ENCODE measurements at regions of chr9 and their contacts with region 1.

Region 1: GRCh38 chr9:70639853-70640814 is 225.7 kb upstream of the KLF9 start:
- DNase-seq: peak; percentile 62
- H3K4me3 ChIP-seq: no peak overlapping the region
- H3K27ac ChIP-seq: no peak overlapping the region
- H3K4me1 ChIP-seq: peaks cover 5% of the 10 kb centered on the region
- H3K27me3 ChIP-seq: peaks cover 0 to 2% of the 10 kb centered on the region in 2 experiments
- CTCF ChIP-seq: peak; percentile 51
- POLR2A ChIP-seq: no peak

Region 2: GRCh38 chr9:70542311-70542931 is 97.7 kb before region 1 on chr9:
- CTCF ChIA-PET with region 1: no interaction called
- POLR2A ChIA-PET with region 1: no interaction called
- dilution Hi-C with region 1: no loop called
- intact Hi-C with region 1: no loop called
- DNase-seq: no peak
- H3K4me3 ChIP-seq: no peak overlapping the region
- H3K27ac ChIP-seq: no peak overlapping the region
- H3K4me1 ChIP-seq: no peaks in the 10 kb centered on the region
- H3K27me3 ChIP-seq: no peaks in the 10 kb centered on the region
- CTCF ChIP-seq: no peak
- POLR2A ChIP-seq: no peak

Region 3: GRCh38 chr9:70563431-70564204 is 76.5 kb before region 1 on chr9:
- CTCF ChIA-PET with region 1: no interaction called
- POLR2A ChIA-PET with region 1: no interaction called
- dilution Hi-C with region 1: no loop called
- intact Hi-C with region 1: no loop called
- DNase-seq: no peak
- H3K4me3 ChIP-seq: no peak overlapping the region
- H3K27ac ChIP-seq: no peak overlapping the region
- H3K4me1 ChIP-seq: no peaks in the 10 kb centered on the region
- H3K27me3 ChIP-seq: no peaks in the 10 kb centered on the region
- CTCF ChIP-seq: no peak
- POLR2A ChIP-seq: no peak

Region 4: DNA sequence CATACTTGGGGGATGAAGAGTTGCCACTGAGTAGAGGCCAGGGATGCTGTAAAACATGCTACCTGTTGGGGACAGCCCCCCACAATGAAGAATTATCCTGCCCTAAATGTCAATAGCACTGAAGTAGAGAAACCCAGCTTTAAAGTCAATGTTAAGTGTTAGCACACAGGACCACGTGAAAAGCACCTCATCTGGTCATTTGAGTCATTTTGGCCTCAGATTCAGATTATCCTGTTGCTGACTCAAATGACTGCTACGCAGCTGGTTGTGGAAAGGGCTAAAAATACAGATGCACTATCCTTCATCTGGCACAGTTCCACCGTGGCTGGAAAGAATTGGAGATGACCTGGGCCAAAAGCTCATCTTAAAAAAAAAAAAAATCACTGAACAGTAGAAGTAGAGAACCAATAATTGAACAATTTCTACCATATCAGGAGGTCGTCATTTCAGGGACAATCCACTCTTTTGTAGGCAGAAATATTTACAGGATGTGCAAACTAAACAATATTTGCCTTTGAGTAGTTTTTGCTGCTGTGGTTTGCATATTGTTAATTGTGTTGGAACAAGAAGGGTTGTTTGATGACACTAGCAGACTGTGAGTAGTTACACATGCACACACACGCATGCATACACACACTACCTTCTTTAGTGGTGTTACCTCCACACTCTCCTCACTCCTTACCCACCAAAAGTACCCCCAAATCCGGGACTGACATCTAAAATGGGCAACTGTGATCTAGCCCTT is 30.4 kb before region 1 on chr9:
- CTCF ChIA-PET with region 1: no interaction called
- POLR2A ChIA-PET with region 1: no interaction called
- dilution Hi-C with region 1: no loop called
- intact Hi-C with region 1: no loop called
- DNase-seq: no peak
- H3K4me3 ChIP-seq: no peak overlapping the region
- H3K27ac ChIP-seq: no peak overlapping the region
- H3K4me1 ChIP-seq: no peaks in the 10 kb centered on the region
- H3K27me3 ChIP-seq: peaks cover 4 to 5% of the 10 kb centered on the region in 2 experiments
- CTCF ChIP-seq: no peak
- POLR2A ChIP-seq: no peak

Region 5: DNA sequence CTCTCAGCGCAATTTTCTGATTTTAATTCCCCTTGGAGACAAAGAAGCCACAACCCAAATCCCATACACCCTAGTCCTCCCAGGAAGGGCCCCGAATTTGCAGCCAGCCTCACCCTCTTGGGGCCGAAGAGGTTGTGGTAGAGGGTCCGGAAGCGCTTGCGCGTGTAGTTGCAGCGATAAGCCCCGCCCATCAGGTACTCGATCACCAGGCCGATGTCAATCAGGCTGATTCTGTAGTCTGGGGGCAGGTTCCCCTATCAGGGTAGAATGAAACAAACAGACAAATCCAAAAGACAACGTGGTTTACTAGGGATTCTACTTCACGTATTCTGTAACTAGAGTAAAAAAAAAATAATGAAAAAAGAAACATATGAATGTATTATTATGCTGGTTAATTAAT is 15.1 kb before region 1 on chr9:
- CTCF ChIA-PET with region 1: interaction called, 21 read pairs
- POLR2A ChIA-PET with region 1: no interaction called
- dilution Hi-C with region 1: no loop called
- intact Hi-C with region 1: no loop called
- DNase-seq: no peak
- H3K4me3 ChIP-seq: no peak overlapping the region
- H3K27ac ChIP-seq: no peak overlapping the region
- H3K4me1 ChIP-seq: no peaks in the 10 kb centered on the region
- H3K27me3 ChIP-seq: peaks cover 0 to 2% of the 10 kb centered on the region in 2 experiments
- CTCF ChIP-seq: no peak
- POLR2A ChIP-seq: no peak

Region 6: GRCh38 chr9:70924895-70925547 is 284.9 kb after region 1 on chr9:
- CTCF ChIA-PET with region 1: interaction called, 49 read pairs
- POLR2A ChIA-PET with region 1: no interaction called
- dilution Hi-C with region 1: no loop called
- intact Hi-C with region 1: loop called (anchors 1 kb)
- DNase-seq: peak; percentile 90
- H3K4me3 ChIP-seq: peak overlapping the region; percentile 8 to 63 (median 8)
- H3K27ac ChIP-seq: peak overlapping the region; percentile 27
- H3K4me1 ChIP-seq: peaks cover 8% of the 10 kb centered on the region
- H3K27me3 ChIP-seq: no peaks in the 10 kb centered on the region
- CTCF ChIP-seq: peak; percentile 74 to 83
- POLR2A ChIP-seq: no peak

Region 7: DNA sequence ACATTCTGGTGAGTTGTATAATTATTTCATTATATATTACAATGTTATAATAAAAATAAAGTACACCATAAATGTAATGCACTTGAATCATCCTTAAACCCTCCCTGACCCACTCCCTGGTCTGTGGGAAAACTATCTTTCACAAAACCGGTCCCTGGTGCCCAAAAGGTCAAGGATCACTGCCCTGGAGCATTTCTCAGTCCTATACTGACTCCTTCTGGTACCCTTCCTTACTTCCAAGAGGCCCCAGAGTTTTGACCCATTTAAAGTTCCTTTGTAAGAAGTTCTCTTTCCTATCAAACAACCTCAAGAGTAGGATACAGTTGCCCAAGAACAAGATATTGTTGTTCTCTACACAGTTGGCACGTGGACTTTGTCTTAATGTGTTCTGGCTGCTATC is 570.2 kb after region 1 on chr9:
- CTCF ChIA-PET with region 1: interaction called, 10 read pairs
- POLR2A ChIA-PET with region 1: no interaction called
- dilution Hi-C with region 1: no loop called
- intact Hi-C with region 1: no loop called
- DNase-seq: no peak
- H3K4me3 ChIP-seq: no peak overlapping the region
- H3K27ac ChIP-seq: no peak overlapping the region
- H3K4me1 ChIP-seq: no peaks in the 10 kb centered on the region
- H3K27me3 ChIP-seq: no peaks in the 10 kb centered on the region
- CTCF ChIP-seq: no peak
- POLR2A ChIP-seq: no peak

Region 8: GRCh38 chr9:71249729-71250317 is 609.7 kb after region 1 on chr9:
- CTCF ChIA-PET with region 1: interaction called, 420 read pairs
- POLR2A ChIA-PET with region 1: no interaction called
- dilution Hi-C with region 1: no loop called
- intact Hi-C with region 1: loop called (anchors 1 kb)
- DNase-seq: peak; percentile 78
- H3K4me3 ChIP-seq: no peak overlapping the region
- H3K27ac ChIP-seq: no peak overlapping the region
- H3K4me1 ChIP-seq: no peaks in the 10 kb centered on the region
- H3K27me3 ChIP-seq: peaks cover 4 to 9% of the 10 kb centered on the region in 2 experiments
- CTCF ChIP-seq: peak; percentile 69
- POLR2A ChIP-seq: no peak

Region 9: GRCh38 chr9:71819115-71819739 is 1179.1 kb after region 1 on chr9:
- CTCF ChIA-PET with region 1: interaction called, 13 read pairs
- POLR2A ChIA-PET with region 1: no interaction called
- dilution Hi-C with region 1: no loop called
- intact Hi-C with region 1: no loop called
- DNase-seq: peak; percentile 35
- H3K4me3 ChIP-seq: no peak overlapping the region
- H3K27ac ChIP-seq: no peak overlapping the region
- H3K4me1 ChIP-seq: peaks cover 4% of the 10 kb centered on the region
- H3K27me3 ChIP-seq: peaks cover 0 to 2% of the 10 kb centered on the region in 2 experiments
- CTCF ChIP-seq: peak; percentile 44 to 49
- POLR2A ChIP-seq: no peak

Region 10: DNA sequence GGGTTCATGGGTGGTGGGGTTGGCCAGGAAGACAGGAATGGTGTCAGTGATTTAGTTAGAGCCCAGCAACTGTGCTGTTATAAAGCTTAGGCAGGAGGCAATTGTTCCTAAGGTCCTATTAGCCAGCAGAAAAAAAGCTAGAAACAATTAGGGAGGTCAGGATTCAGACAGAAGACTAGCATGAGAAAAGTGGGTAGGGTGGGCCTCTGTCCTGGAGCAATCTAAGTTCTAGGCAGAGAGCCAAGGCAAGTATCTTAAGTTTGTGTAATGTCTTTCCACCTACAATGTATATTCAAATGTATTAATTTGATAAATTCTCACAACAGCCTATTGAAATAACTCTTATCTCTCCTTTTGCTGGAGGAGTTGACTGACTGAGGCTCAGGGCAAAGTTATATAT is 1731.0 kb after region 1 on chr9:
- CTCF ChIA-PET with region 1: no interaction called
- POLR2A ChIA-PET with region 1: no interaction called
- dilution Hi-C with region 1: no loop called
- intact Hi-C with region 1: no loop called
- DNase-seq: no peak
- H3K4me3 ChIP-seq: no peak overlapping the region
- H3K27ac ChIP-seq: no peak overlapping the region
- H3K4me1 ChIP-seq: peaks cover 3% of the 10 kb centered on the region
- H3K27me3 ChIP-seq: no peaks in the 10 kb centered on the region
- CTCF ChIP-seq: no peak
- POLR2A ChIP-seq: no peak

Measured in endothelial cell of umbilical vein (primary cell).